Lower leg skin (tissue), 4 donors: ENCODE measurements at regions of chr11 and their contacts with region 1.

Region 1: DNA sequence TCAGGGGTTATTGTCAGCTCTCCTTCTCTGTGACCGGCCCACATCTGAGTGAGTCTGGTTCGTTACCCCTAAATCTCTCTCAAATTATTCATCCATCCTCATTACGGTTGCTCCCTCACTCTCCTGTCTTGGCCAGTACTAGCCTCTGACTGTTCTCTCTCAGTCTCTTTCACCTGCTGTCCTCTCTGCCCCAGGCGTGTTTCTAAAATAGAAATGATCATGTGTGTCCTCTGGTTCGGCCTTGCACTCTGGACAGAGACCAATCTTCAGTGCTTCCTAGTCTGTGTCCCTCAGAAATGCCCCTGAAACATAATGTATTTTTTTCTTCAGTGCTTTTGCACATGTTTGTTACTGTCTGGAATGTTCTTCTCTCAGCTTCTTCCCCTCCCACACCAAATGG is 4.9 kb downstream of the PSMD13 start:
- DNase-seq: peak in 1 of 2 donors; percentile 17
- H3K4me3 ChIP-seq: no peak overlapping the region
- CTCF ChIP-seq: no peak
- POLR2A ChIP-seq: no peak

Region 2: GRCh38 chr11:209275-210121 is 32.1 kb before region 1 on chr11:
- intact Hi-C with region 1: loop called (anchors 1 kb)
- DNase-seq: peak in 1 of 2 donors; percentile 87
- H3K4me3 ChIP-seq: peak overlapping the region; percentile 78
- CTCF ChIP-seq: no peak
- POLR2A ChIP-seq: no peak

Region 3: GRCh38 chr11:422249-422656 is 180.6 kb after region 1 on chr11:
- intact Hi-C with region 1: no loop called
- DNase-seq: no peak
- H3K4me3 ChIP-seq: no peak overlapping the region
- CTCF ChIP-seq: no peak
- POLR2A ChIP-seq: no peak